HCT116 (cell line): ENCODE measurements at regions of chr2 and their contacts with region 1.

Region 1: DNA sequence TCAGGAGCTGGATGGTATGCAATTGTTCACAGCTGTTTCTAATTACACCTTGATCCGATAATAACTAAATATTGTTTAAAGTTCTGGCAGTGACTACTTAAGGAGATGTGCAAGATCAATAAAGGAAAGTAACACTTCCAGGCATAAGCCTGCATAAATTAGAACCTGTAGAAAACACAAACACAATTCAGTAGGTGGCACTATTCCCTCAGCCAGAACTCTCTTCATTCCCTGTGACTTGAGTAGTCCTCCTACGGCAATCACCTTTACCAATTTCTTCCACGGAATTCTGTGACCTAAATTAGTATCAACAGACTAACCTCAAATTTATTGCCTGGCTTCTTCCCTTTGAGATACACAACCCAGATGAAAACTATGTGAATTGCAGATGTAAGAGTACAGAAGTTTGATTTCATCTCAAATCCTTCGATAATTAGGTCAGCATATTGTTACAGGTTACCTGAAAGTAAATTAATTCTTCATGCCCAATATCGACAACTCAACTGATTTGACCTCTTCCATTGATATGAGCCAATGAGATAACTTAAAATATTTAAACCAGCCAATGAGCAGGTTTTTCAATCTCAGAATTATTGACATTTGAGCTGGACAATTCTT is 137.8 kb downstream of the PID1 start:
- DNase-seq: peak; percentile 50
- ATAC-seq: peak; percentile 91
- H3K4me3 ChIP-seq: no peak overlapping the region
- H3K27ac ChIP-seq: no peak overlapping the region
- H3K4me1 ChIP-seq: no peaks in the 10 kb centered on the region
- H3K27me3 ChIP-seq: no peaks in the 10 kb centered on the region
- CTCF ChIP-seq: peak; percentile 51 to 67 (median 62)
- POLR2A ChIP-seq: no peak
- RAD21 ChIP-seq: peak; percentile 87

Region 2: GRCh38 chr2:229205704-229206103 is 72.4 kb after region 1 on chr2:
- CTCF ChIA-PET with region 1: no interaction called
- POLR2A ChIA-PET with region 1: no interaction called
- RAD21 ChIA-PET with region 1: no interaction called
- intact Hi-C with region 1: no loop called
- DNase-seq: no peak
- ATAC-seq: no peak
- H3K4me3 ChIP-seq: no peak overlapping the region
- H3K27ac ChIP-seq: no peak overlapping the region
- H3K4me1 ChIP-seq: no peaks in the 10 kb centered on the region
- H3K27me3 ChIP-seq: no peaks in the 10 kb centered on the region
- CTCF ChIP-seq: no peak
- POLR2A ChIP-seq: no peak
- RAD21 ChIP-seq: no peak

Region 3: DNA sequence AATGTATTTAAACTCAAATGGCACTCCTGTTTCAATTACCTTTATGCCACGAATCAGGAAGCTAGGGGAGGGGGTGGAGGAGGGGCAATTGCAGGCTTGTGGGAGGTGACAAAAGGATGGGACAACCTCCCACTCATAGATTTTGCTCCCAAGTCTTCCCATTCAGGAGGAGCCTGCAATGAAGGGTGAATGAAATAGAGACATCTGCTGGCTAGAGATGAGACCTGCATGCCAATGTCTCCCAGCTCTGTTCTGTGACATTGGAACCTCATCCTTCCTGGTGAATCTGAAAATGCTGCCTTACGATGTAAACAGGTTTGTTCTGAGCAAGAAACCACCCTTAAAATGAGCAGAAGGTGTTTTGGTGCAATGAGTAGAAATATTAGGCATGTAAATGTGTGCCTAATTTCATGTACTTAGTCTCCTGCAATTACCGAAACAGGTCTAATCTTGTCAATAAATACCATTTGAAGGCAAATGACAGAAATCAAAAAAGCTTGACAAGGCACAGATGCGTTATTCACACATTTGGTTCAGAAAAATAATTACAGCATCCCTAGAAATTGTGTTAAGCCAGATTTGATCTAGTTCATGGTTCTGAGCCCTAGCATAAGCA is 140.6 kb after region 1 on chr2:
- CTCF ChIA-PET with region 1: interaction called, 3 read pairs
- POLR2A ChIA-PET with region 1: no interaction called
- RAD21 ChIA-PET with region 1: no interaction called
- intact Hi-C with region 1: loop called (anchors 1 kb)
- DNase-seq: peak; percentile 81
- ATAC-seq: peak; percentile 99
- H3K4me3 ChIP-seq: peak overlapping the region in 1 of 2 experiments; percentile 18; a peak in 1 of 4 replicates
- H3K27ac ChIP-seq: no peak overlapping the region
- H3K4me1 ChIP-seq: peaks cover 0 to 10% of the 10 kb centered on the region in 2 experiments; a peak in 3 of 4 replicates
- H3K27me3 ChIP-seq: no peaks in the 10 kb centered on the region
- CTCF ChIP-seq: peak; percentile 71 to 82 (median 79); a peak in 5 of 6 replicates
- POLR2A ChIP-seq: no peak
- RAD21 ChIP-seq: peak; percentile 78

Region 4: DNA sequence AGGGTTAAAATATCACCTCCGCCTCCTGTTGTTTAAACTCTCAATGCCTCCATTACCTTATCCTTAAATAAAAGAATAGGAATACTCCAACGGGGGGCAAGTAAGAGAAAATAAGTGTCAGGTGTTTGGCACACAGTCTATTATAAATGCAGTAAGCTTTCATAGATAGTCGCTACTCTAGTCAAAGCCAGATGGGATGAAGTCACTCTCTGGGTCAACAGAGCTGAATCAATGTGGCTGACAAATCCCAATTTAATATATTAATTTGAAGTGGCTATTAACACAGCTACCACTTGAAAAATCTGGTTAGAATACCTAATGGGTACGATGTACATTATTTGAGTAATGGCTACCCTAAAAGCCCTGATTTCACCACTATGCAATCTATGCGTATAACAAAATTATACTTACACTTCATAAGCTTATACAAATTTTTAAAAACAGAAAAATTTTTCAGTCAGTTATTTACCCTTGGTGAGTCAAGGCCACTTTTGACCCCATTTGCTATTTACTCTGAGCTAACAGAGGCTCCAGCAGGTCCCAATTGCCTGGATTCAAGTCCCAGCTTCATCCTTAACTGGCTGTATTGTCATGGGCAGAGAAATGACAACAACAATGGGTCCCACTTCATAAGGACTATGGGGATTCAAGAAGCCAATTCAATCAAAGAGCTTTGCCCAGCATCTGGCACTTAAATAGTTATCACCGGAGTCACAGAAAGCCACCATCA is 305.3 kb after region 1 on chr2:
- CTCF ChIA-PET with region 1: no interaction called
- POLR2A ChIA-PET with region 1: no interaction called
- RAD21 ChIA-PET with region 1: no interaction called
- intact Hi-C with region 1: loop called (anchors 5 kb)
- DNase-seq: no peak
- ATAC-seq: no peak
- H3K4me3 ChIP-seq: no peak overlapping the region
- H3K27ac ChIP-seq: no peak overlapping the region
- H3K4me1 ChIP-seq: no peaks in the 10 kb centered on the region
- H3K27me3 ChIP-seq: no peaks in the 10 kb centered on the region
- CTCF ChIP-seq: no peak
- POLR2A ChIP-seq: no peak
- RAD21 ChIP-seq: no peak